Gastrocnemius medialis (tissue), 4 donors: ENCODE measurements at regions of chr10 and their contacts with region 1.

Region 1: DNA sequence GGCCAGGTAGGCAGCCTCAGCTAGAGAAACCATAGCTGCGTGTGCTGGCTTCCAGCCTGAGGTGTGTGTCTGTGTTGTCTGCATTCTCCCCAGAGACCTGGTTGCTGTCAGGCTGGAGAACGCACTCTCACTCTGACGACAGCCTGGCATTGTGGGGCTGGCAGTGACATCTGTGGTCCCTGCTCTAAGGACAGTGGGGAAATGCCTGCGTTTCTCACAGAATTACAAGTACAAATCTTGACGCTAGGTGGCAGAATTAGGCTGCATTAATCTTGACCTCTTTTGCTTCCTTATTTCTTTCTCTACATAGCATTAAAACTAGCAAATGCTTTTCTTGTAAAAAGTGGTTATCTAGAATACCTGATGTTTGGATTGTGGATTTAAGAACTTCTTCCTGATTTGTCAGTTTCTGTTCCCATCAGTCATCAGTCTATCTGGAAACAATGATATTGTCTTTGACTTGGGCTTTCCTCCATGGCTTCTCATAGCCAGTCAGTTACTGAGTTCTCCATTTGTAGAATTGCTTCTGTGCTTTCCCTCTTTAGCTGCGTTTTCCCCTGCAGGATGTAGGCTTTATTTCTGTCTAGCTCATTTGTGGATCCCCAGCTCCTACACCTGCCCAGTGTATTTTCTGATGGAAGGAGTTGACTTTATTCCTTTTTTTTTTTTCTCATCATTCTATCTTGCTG is 86.0 kb downstream of the FANK1 start:
- DNase-seq: no peak
- ATAC-seq: no peak
- H3K4me3 ChIP-seq: no peak overlapping the region
- H3K27ac ChIP-seq: no peak overlapping the region
- H3K4me1 ChIP-seq: no peaks in the 10 kb centered on the region
- H3K27me3 ChIP-seq: no peaks in the 10 kb centered on the region
- CTCF ChIP-seq: peak; percentile 25 to 59 (median 54)
- POLR2A ChIP-seq: no peak

Region 2: DNA sequence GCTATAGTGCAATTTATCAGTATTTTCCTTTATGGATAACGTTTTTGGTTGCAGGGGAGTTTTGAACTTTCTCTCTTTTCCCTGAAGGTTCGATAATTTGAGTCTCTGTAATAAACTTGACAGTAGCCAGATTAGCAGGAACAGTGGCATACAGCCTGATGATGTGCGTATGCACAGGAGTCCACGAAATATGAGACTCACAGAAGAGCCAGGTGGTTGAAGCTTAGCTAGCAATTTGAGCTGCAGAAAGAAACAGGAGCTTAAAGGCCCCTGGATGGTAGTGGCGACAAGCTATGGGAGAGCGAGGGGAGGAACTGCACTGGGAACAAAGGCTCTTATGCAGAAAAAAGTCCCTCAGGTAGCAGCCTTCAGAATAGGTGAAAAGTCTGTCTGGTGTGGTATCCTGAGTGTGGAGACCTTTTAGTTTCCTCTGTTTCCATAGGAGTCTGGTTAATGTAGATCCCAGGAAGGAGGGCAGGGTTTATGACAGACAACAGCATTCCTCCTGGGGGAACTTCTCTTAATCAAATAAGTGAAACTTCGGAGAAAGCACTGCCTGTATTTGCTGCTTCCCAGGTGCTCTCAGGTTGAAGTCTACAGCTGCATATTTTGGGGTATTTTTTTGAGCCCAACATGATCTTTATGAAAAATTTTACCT is 53.3 kb before region 1 on chr10:
- in situ Hi-C with region 1: no loop called
- intact Hi-C with region 1: no loop called
- DNase-seq: no peak
- ATAC-seq: no peak
- H3K4me3 ChIP-seq: no peak overlapping the region
- H3K27ac ChIP-seq: no peak overlapping the region
- H3K4me1 ChIP-seq: no peaks in the 10 kb centered on the region
- H3K27me3 ChIP-seq: no peaks in the 10 kb centered on the region
- CTCF ChIP-seq: no peak
- POLR2A ChIP-seq: no peak

Region 3: GRCh38 chr10:126387023-126387921 is 404.9 kb after region 1 on chr10:
- in situ Hi-C with region 1: loop called in 1 of 4 experiments (anchors 25 kb)
- intact Hi-C with region 1: no loop called
- DNase-seq: no peak
- ATAC-seq: no peak
- H3K4me3 ChIP-seq: peak overlapping the region; percentile 9 to 45 (median 24)
- H3K27ac ChIP-seq: no peak overlapping the region
- H3K4me1 ChIP-seq: peaks cover 0 to 5% of the 10 kb centered on the region in 2 donors
- H3K27me3 ChIP-seq: peaks cover 10 to 25% (median 20%) of the 10 kb centered on the region in 3 donors
- CTCF ChIP-seq: peak in 3 of 5 experiments; percentile 38 to 51 (median 42)
- POLR2A ChIP-seq: no peak

Region 4: GRCh38 chr10:126504063-126504739 is 521.8 kb after region 1 on chr10:
- in situ Hi-C with region 1: loop called (anchors 5 to 25 kb)
- intact Hi-C with region 1: loop called (anchors 10 kb)
- DNase-seq: no peak
- ATAC-seq: no peak
- H3K4me3 ChIP-seq: no peak overlapping the region
- H3K27ac ChIP-seq: no peak overlapping the region
- H3K4me1 ChIP-seq: no peaks in the 10 kb centered on the region
- H3K27me3 ChIP-seq: no peaks in the 10 kb centered on the region
- CTCF ChIP-seq: peak in 4 of 5 experiments; percentile 4 to 42 (median 35)
- POLR2A ChIP-seq: no peak

Region 5: DNA sequence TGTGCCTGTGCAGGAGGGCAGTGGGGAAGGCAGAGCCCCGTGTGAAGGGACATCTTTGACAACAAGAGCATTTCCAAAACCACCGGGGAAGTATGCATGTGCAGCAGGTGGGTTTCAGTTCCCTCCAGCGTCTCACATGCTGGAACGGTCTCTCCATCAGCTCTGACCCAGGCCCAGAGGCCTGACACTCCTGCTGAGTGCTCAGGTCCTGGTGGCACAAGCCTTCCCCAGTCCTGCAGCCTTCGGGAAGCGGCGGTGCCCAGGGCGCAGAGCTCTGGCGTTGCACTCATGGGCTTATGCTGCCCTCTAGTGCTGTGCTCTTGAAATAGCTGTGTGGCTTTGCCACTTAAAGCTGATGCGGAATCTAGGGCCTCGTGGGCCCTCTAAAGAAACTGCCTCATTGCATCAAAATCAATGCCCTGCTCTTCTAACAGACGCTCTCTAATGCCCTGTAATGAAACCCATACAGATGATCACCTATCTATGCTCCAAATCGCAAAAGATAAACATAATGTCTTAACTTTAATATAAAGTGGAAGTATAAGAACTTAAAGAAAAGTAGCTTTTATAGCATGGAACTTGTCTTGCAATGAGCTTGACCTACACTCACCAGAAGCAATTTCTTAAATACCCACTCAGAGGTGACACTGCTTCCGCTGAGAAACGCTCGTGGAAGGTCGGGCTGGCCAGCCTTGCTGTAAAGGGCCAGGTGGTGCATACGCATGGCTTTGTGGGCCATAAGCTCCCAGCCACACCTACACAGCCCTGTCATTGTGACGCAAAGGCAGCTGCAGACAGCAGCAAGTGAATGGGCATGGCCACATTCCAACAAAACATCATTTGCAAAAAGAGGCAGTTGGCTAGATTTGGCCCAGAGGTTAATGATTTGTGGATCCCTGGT is 1871.7 kb after region 1 on chr10:
- in situ Hi-C with region 1: no loop called
- intact Hi-C with region 1: loop called (anchors 10 kb)
- DNase-seq: no peak
- ATAC-seq: peak; percentile 60 to 62
- H3K4me3 ChIP-seq: no peak overlapping the region
- H3K27ac ChIP-seq: no peak overlapping the region
- H3K4me1 ChIP-seq: no peaks in the 10 kb centered on the region
- H3K27me3 ChIP-seq: no peaks in the 10 kb centered on the region
- CTCF ChIP-seq: peak; percentile 50 to 82 (median 68)
- POLR2A ChIP-seq: no peak